ENCODE measurements at regions of chr12 and their contacts with region 1.

Region 1: GRCh38 chr12:52023182-52023975 is 16.6 kb downstream of the TAMALIN start:
- DNase-seq: peak; percentile 96
- H3K4me3 Mint-ChIP-seq: peak overlapping the region; percentile 84
- H3K27ac Mint-ChIP-seq: peak overlapping the region; percentile 99
- H3K4me1 Mint-ChIP-seq: peaks cover 51% of the 10 kb centered on the region
- H3K27me3 Mint-ChIP-seq: peaks cover 41% of the 10 kb centered on the region

Region 2: DNA sequence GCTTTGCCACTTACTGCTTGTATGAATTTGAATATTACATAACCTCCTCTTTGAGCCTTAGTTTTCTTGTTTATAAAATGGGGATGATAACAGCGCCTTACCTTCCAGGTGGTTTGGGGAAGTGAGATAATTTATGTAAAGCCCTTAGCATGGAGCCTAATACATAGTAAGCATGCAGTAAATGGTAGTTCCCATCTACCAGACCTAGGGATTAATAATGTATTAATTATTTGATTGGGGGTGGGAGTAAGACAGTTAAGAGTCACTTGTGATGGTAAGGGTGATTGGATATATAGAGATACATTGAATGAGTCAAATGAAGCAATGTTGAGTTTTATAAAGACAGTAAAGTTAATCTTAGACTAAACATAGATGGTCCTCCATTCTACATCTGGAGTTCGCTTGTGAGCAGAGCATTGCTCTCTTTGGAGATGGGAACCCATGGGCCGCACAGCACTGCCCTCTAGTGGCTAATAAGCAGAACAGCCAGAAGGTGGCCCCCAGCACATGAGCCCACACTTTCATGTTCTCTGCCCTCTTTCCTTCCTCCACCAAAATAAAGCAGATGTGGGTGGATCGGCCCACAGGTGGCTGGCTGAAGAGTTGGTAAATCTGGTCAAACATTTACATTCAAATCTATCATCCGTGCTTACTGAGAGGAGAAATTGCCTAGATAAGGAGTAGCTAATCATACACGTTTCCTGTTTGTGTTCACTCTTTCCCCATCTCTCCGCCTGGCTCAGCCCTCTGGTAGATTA is 43.1 kb before region 1 on chr12:
- CTCF ChIA-PET with region 1: interaction called, 12 read pairs
- DNase-seq: peak; percentile 75
- H3K4me3 Mint-ChIP-seq: no peak overlapping the region
- H3K27ac Mint-ChIP-seq: no peak overlapping the region
- H3K4me1 Mint-ChIP-seq: peaks cover 21% of the 10 kb centered on the region
- H3K27me3 Mint-ChIP-seq: peaks cover under 1% of the 10 kb centered on the region

Region 3: GRCh38 chr12:52004042-52004648 is 19.2 kb before region 1 on chr12:
- CTCF ChIA-PET with region 1: interaction called, 254 read pairs
- DNase-seq: peak; percentile 38
- H3K4me3 Mint-ChIP-seq: no peak overlapping the region
- H3K27ac Mint-ChIP-seq: no peak overlapping the region
- H3K4me1 Mint-ChIP-seq: peaks cover 26% of the 10 kb centered on the region
- H3K27me3 Mint-ChIP-seq: peaks cover 64% of the 10 kb centered on the region

Region 4: DNA sequence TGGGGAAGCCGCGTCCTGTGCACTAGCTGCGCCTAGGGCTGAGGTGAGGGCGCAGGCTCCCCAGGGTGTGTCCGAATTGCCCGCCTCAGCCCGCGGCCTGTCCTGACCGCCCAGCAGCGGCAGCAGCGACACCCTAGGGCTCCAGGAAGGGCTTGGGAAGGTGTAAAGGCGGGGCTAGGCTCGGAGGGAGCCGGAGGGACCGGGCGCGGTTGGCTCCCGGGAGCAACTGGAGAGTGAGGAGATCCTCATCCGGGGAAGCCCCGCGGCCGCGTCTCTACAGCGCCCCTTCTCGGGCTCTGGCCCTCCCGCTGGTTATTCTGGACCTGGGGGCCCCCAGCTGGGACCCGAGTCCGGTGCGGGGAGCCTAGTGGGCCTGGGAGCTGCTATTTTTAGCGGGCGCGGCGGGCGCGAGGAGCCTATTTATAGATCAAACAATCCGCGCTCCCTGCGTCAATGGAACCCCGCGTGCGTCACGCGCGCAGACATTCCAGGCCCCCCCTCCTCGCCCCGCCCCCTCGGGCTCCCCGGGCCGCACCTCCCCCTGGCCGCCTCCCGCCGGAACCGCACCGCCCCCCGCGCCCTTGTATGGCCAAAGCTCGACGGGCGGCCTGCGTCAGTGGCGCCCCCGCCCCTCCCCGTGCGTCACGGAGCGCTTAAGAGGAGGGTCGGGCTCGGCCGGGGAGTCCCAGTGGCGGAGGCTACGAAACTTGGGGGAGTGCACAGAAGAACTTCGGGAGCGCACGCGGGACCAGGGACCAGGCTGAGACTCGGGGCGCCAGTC is 27.6 kb after region 1 on chr12 and contains the start of gene NR4A1:
- CTCF ChIA-PET with region 1: interaction called, 24 read pairs
- DNase-seq: peak; percentile 99
- H3K4me3 Mint-ChIP-seq: peak within 1 kb of the TSS; percentile 83
- H3K27ac Mint-ChIP-seq: peak within 1 kb of the TSS; percentile 94
- H3K4me1 Mint-ChIP-seq: peaks cover 43% of the 10 kb centered on the region
- H3K27me3 Mint-ChIP-seq: peaks cover 22% of the 10 kb centered on the region

Region 5: DNA sequence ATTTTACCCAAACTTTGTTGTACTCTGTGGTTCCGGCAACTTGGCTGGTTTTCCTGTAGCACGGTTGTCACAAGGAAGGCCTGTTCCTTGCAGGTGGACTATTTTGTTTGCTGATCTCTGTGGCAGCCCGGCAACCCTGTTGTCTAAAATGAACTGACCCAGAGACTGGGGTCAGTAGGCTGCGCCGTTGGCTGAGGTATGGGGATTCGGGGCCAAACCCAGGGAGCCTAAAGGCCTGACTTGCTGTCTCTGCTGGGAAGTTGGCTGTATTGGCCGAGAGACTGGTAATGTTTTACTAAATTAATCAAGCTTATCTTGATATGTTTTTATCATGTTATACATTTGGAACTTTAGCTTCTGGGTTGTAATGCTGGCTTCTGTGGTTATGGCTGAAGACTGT is 70.0 kb after region 1 on chr12:
- CTCF ChIA-PET with region 1: interaction called, 637 read pairs
- DNase-seq: no peak
- H3K4me3 Mint-ChIP-seq: no peak overlapping the region
- H3K27ac Mint-ChIP-seq: no peak overlapping the region
- H3K4me1 Mint-ChIP-seq: no peaks in the 10 kb centered on the region
- H3K27me3 Mint-ChIP-seq: peaks cover 50% of the 10 kb centered on the region

Region 6: GRCh38 chr12:52338241-52338960 is 315.0 kb after region 1 on chr12:
- CTCF ChIA-PET with region 1: no interaction called
- DNase-seq: peak; percentile 10
- H3K4me3 Mint-ChIP-seq: no peak overlapping the region
- H3K27ac Mint-ChIP-seq: no peak overlapping the region
- H3K4me1 Mint-ChIP-seq: peaks cover 3% of the 10 kb centered on the region
- H3K27me3 Mint-ChIP-seq: peaks cover 22% of the 10 kb centered on the region